KBM-7 (cell line): ENCODE measurements at regions of chr4 and their contacts with region 1.

Region 1: DNA sequence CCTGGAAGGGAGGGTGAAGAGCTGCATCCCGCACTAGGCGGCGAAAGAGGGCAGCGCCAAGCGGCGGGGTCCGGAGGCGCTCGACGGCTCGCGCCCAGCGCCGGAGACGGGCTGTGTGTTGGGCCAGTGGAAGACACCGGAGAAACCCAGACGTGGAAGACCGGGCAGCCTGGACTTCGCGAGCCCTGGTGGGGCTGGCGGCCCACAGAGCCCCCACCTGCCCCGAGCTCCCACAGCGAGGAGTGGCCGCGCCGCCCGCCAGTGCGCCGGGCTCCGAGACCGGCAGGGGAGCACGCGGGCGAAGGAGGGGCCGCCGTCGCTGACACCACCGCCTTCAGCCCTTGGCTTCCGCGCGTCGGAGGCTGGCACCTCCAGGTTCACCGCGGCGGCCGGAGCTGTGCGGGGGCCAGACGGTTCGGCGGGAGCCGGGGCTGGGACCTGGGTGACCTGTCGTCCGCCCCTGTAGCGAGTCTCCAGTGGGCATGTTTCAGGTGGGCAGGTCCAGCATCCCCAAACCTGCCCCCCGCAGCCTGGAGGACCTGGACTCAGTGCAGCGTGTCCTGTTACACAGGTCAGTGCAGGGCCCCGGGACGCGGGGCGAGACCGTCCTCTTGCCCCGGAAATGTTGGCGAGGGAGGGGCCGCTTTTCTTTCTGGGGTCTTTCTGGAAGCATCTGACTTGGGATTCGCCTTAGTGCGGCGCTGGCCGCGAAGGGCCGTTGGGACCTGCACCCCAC is 9.7 kb upstream of the INTU start:
- DNase-seq: peak; percentile 73

Region 2: GRCh38 chr4:127732613-127733328 is 109.7 kb after region 1 on chr4:
- in situ Hi-C with region 1: loop called (anchors 25 kb)
- DNase-seq: peak; percentile 70

Region 3: GRCh38 chr4:127778102-127778501 is 155.0 kb after region 1 on chr4:
- in situ Hi-C with region 1: no loop called
- DNase-seq: no peak

Region 4: GRCh38 chr4:127997534-127998388 is 374.7 kb after region 1 on chr4:
- in situ Hi-C with region 1: no loop called
- DNase-seq: no peak

Region 5: GRCh38 chr4:128076465-128076864 is 453.4 kb after region 1 on chr4:
- in situ Hi-C with region 1: no loop called
- DNase-seq: no peak